ENCODE measurements at regions of chr11 and their contacts with region 1.

Region 1: DNA sequence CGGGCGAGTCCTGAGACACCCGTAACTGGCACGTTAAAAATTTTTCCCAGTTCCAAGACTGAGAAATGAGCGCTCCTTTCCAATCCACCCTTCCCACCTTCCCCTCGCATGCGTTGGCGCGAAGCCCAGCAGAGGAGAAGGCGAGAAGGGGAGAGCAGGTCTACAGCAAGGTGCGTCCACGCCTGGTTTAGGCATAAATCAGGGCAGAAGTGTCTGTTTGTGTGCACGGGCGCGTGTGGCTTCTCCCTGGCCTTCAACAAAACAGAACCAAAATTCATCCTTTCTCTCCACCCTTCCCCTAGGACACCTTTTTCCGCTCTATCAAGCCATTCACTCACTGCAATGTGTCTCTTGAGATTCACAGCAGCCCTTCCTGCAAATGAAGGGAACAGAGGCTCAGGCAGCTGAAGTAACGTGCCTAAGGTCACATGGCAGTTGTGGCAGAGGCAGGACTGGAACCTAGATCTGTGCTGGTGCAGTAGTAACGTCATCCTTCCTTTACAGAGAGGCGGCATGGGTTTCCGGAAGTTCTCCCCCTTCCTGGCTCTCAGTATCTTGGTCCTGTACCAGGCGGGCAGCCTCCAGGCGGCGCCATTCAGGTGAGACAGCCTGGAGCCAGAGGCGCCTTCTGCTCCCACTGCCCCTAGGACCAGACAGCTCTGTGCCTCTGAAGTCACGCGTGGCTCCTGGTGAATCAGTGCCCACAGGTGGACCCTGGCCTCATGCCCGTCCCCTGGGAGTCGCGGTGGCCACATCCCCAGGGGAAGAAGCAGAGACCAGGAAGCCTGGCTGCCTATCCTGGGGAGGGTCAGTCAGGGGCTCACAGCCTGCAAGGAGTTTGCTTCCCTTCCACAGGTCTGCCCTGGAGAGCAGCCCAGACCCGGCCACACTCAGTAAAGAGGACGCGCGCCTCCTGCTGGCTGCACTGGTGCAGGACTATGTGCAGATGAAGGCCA is 1.1 kb downstream of the CALCB start:
- DNase-seq: peak; percentile 83 to 93 (median 92)
- H3K4me3 ChIP-seq: peak overlapping the region in 2 of 3 donors; percentile 6 to 38
- H3K27ac ChIP-seq: no peak overlapping the region
- H3K4me1 ChIP-seq: peaks cover 0 to 11% (median 0%) of the 10 kb centered on the region in 3 donors
- H3K27me3 ChIP-seq: peaks cover 6% of the 10 kb centered on the region
- CTCF ChIP-seq: peak; percentile 71

Region 2: DNA sequence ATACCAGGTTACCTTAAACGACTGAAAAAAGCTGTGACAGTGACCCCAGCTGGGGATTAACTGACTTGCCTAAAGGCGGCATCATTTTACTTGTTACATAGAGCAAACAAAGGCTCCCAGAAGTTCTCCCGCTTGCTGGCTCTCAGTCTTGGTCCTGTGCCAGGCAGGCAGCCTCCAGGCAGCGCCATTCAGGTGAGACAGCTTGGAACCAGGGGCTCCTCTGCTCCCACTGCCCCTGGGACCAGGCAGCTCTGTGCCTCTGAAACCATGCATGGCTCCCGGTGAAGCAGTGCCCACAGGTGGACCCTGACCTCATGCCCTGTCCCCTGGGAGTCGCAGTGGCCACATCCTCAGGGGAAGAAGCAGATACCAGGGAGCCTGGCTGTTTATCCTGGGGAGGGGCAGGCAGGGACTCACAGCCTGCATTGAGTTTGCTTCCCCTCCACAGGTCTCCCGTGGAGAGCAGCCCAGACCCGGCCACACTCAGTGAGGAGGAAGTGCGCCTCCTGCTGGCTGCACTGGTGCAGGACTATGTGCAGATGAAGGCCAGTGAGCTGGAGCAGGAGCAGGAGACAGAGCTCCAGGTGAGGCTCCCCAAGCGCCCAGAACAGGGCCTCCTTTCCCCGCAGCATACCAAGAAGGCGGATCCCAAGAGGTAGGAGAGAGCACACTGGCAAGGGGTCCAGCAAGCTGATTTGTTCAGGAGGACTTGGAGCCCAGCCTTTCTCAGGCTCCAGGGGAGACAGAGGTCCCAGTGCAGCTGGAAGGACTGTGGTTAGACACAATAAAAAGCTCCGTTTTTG is 166.9 kb before region 1 on chr11:
- intact Hi-C with region 1: loop called (anchors 10 kb)
- DNase-seq: peak; percentile 53 to 87 (median 67)
- H3K4me3 ChIP-seq: no peak overlapping the region
- H3K27ac ChIP-seq: no peak overlapping the region
- H3K4me1 ChIP-seq: peaks cover 0 to 4% (median 0%) of the 10 kb centered on the region in 3 donors
- H3K27me3 ChIP-seq: no peaks in the 10 kb centered on the region
- CTCF ChIP-seq: peak; percentile 66

Region 3: DNA sequence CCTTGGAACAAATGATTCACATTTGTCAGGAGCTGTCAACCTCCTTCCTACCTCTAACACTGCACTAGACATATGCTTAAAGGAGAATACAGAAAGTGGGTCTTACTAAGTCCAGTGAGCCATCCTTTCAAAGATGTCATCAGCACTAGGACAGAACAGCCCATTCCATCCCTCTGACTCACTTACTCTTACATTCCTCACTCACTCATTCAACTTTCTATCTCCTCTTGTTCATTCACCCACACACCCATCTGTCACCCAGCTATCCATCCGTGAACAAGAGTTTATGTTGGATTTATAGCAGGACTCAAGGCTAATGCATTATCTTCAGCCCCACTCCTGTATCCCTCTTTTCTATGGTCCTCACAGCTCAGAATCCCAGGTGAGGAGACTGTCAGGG is 49.4 kb after region 1 on chr11:
- intact Hi-C with region 1: no loop called
- DNase-seq: peak in 1 of 5 donors; percentile 16
- H3K4me3 ChIP-seq: no peak overlapping the region
- H3K27ac ChIP-seq: no peak overlapping the region
- H3K4me1 ChIP-seq: no peaks in the 10 kb centered on the region
- H3K27me3 ChIP-seq: no peaks in the 10 kb centered on the region
- CTCF ChIP-seq: no peak

Measured in kidney (tissue), 22 donors.